Dendritic cell treated with granulocyte-macrophage colony-stimulating factor and Interleukin-4, amounts not matched to agents 40 ng/mL and 50 ng/mL, for 4 days (primary cell): ENCODE measurements at regions of chr13 and their contacts with region 1.

Region 1: GRCh38 chr13:100573121-100573520 is 15.5 kb downstream of the GGACT start:
- H3K4me3 Mint-ChIP-seq: no peak overlapping the region
- H3K27ac Mint-ChIP-seq: no peak overlapping the region
- H3K4me1 Mint-ChIP-seq: no peaks in the 10 kb centered on the region
- H3K27me3 Mint-ChIP-seq: no peaks in the 10 kb centered on the region

Region 2: GRCh38 chr13:100608906-100609305 is 35.8 kb after region 1 on chr13:
- intact Hi-C with region 1: no loop called
- H3K4me3 Mint-ChIP-seq: no peak overlapping the region
- H3K27ac Mint-ChIP-seq: peak overlapping the region; percentile 52
- H3K4me1 Mint-ChIP-seq: peaks cover 73% of the 10 kb centered on the region
- H3K27me3 Mint-ChIP-seq: no peaks in the 10 kb centered on the region

Region 3: DNA sequence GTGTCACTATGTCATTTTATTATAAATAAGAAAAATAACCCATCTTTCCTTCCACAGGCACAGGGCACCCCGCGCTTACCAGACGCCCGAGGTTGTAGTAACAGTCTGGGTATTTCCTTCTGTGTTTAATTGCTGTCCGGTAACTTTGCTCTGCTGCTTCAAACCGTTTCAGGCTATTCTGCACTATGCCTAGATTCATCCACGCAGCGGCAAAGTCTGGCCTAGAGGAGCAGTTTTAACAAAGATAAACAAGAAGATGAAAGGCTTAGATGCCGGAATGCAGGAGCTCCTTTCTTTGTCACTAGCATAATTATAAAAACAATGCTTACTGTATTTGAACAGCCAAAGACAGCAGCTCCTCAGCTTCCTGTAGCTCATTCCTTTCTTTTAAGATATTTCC is 52.3 kb after region 1 on chr13:
- intact Hi-C with region 1: loop called (anchors 5 kb)
- H3K4me3 Mint-ChIP-seq: no peak overlapping the region
- H3K27ac Mint-ChIP-seq: no peak overlapping the region
- H3K4me1 Mint-ChIP-seq: no peaks in the 10 kb centered on the region
- H3K27me3 Mint-ChIP-seq: no peaks in the 10 kb centered on the region

Region 4: GRCh38 chr13:100674848-100675660 is 101.9 kb after region 1 on chr13:
- intact Hi-C with region 1: loop called (anchors 5 kb)
- H3K4me3 Mint-ChIP-seq: peak overlapping the region; percentile 87
- H3K27ac Mint-ChIP-seq: peak overlapping the region; percentile 86
- H3K4me1 Mint-ChIP-seq: peaks cover 38% of the 10 kb centered on the region
- H3K27me3 Mint-ChIP-seq: peaks cover 17% of the 10 kb centered on the region

Region 5: GRCh38 chr13:101127741-101128353 is 554.7 kb after region 1 on chr13:
- intact Hi-C with region 1: loop called (anchors 1 kb)
- H3K4me3 Mint-ChIP-seq: no peak overlapping the region
- H3K27ac Mint-ChIP-seq: no peak overlapping the region
- H3K4me1 Mint-ChIP-seq: no peaks in the 10 kb centered on the region
- H3K27me3 Mint-ChIP-seq: no peaks in the 10 kb centered on the region